HepG2 (cell line): ENCODE measurements at regions of chr15 and their contacts with region 1.

Region 1: GRCh38 chr15:74988007-74988800 is 7.2 kb upstream of the SCAMP5 start:
- DNase-seq: peak; percentile 65
- ATAC-seq: peak; percentile 99
- H3K4me3 ChIP-seq: no peak overlapping the region
- H3K27ac ChIP-seq: no peak overlapping the region
- H3K4me1 ChIP-seq: 0 out of 2 replicates have a peak, but pooled peaks cover 7% of the 10 kb centered on the region
- H3K27me3 ChIP-seq: peaks cover 0 to 18% of the 10 kb centered on the region in 2 experiments; a peak in 4 of 5 replicates
- CTCF ChIP-seq: peak; percentile 78
- EP300 ChIP-seq: no peak
- POLR2A ChIP-seq: no peak
- RAD21 ChIP-seq: peak; percentile 79

Region 2: GRCh38 chr15:74950078-74951000 is 37.9 kb before region 1 on chr15:
- CTCF ChIA-PET with region 1: no interaction called
- POLR2A ChIA-PET with region 1: no interaction called
- in situ Hi-C with region 1: no loop called
- intact Hi-C with region 1: loop called (anchors 2 kb)
- DNase-seq: peak; percentile 73
- ATAC-seq: peak; percentile 76
- H3K4me3 ChIP-seq: no peak overlapping the region; a peak in 1 of 6 replicates
- H3K27ac ChIP-seq: no peak overlapping the region
- H3K4me1 ChIP-seq: peaks cover 17% of the 10 kb centered on the region
- H3K27me3 ChIP-seq: peaks cover 0 to 15% of the 10 kb centered on the region in 2 experiments; a peak in 3 of 5 replicates
- CTCF ChIP-seq: peak; percentile 97
- EP300 ChIP-seq: no peak
- POLR2A ChIP-seq: no peak
- RAD21 ChIP-seq: peak; percentile 80